ENCODE measurements at regions of chr20 and their contacts with region 1.

Region 1: DNA sequence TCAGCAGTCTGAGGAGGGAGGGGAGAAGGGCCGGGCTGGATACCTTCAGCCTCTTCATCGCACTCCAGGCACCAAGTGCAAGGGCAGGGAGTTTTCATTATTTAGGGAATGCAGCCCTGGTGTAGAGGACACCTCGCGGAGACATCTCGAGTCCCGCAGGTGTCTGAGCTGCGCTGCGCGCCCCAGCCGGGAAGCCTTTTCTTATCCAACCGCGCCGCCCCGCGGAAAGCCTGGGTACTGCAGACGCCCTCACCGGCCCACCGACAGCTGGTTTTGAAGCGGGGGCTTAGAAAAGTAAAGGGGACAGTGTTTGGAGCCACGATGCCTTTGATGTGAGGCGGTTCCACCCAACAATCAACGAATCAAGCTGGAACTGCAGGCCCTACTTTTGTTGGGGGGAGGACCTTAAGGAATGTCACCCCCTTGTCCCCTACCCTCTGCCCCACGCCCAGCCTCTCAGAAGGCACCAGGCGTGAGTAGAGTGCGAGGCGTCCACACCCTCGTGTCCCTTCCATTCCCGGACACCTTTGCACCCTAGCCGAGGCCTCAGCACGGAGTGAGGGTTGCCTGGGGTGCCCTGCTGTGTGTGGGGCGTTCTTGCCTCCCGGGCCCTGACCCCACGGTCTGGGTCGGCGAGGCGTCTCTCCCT is 8.6 kb downstream of the NKX2-2 start:
- DNase-seq: peak; percentile 70 to 83
- ATAC-seq: peak; percentile 41 to 77
- H3K4me3 ChIP-seq: peak overlapping the region; percentile 55
- H3K27ac ChIP-seq: peak overlapping the region; percentile 40 to 77; a peak in 5 of 6 replicates
- H3K4me1 ChIP-seq: peaks cover 6% of the 10 kb centered on the region; the same call in 1 of the 3 replicates
- CTCF ChIP-seq: peak; percentile 95
- EP300 ChIP-seq: no peak
- POLR2A ChIP-seq: no peak
- RAD21 ChIP-seq: peak; percentile 97 to 99

Region 2: GRCh38 chr20:20824924-20825584 is 680.2 kb before region 1 on chr20:
- CTCF ChIA-PET with region 1: interaction called, 13 read pairs
- POLR2A ChIA-PET with region 1: no interaction called
- DNase-seq: peak; percentile 49 to 53
- ATAC-seq: peak; percentile 35 to 80; a peak in 3 of 6 replicates
- H3K4me3 ChIP-seq: no peak overlapping the region
- H3K27ac ChIP-seq: no peak overlapping the region
- H3K4me1 ChIP-seq: no peaks in the 10 kb centered on the region
- CTCF ChIP-seq: peak; percentile 76
- EP300 ChIP-seq: no peak
- POLR2A ChIP-seq: no peak
- RAD21 ChIP-seq: peak; percentile 67

Region 3: GRCh38 chr20:20843982-20844381 is 661.3 kb before region 1 on chr20:
- CTCF ChIA-PET with region 1: interaction called, 199 read pairs
- POLR2A ChIA-PET with region 1: no interaction called
- DNase-seq: no peak
- ATAC-seq: peak in 1 of 2 experiments; percentile 53; a peak in 2 of 6 replicates
- H3K4me3 ChIP-seq: no peak overlapping the region
- H3K27ac ChIP-seq: no peak overlapping the region
- H3K4me1 ChIP-seq: no peaks in the 10 kb centered on the region
- CTCF ChIP-seq: no peak
- EP300 ChIP-seq: no peak
- POLR2A ChIP-seq: no peak
- RAD21 ChIP-seq: no peak

Region 4: GRCh38 chr20:20860078-20860806 is 645.0 kb before region 1 on chr20:
- CTCF ChIA-PET with region 1: interaction called, 128 read pairs
- POLR2A ChIA-PET with region 1: no interaction called
- DNase-seq: peak; percentile 87 to 92
- ATAC-seq: peak; percentile 93 to 97
- H3K4me3 ChIP-seq: no peak overlapping the region
- H3K27ac ChIP-seq: no peak overlapping the region
- H3K4me1 ChIP-seq: no peaks in the 10 kb centered on the region
- CTCF ChIP-seq: peak; percentile 95
- EP300 ChIP-seq: no peak
- POLR2A ChIP-seq: no peak
- RAD21 ChIP-seq: peak; percentile 81 to 88

Region 5: DNA sequence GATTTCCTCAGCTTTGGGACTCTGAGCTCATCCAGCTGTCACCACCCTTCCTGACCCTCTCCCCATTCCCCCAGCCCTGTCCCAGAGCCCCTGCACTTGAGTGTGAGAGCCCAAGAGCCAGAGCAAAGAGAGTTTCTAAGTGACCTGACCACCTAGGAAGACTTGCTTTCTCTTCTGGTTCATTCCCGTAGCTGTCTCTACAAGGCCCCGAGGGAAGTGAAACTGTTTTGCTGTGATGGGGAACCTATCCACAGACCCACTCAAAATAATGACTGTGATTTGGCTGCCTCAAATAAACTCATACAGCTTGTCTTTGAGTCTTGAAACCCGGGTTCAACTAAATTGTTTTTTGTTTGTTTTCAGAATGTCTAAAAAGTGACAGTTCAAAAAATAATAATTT is 276.8 kb before region 1 on chr20:
- CTCF ChIA-PET with region 1: interaction called, 29 read pairs
- POLR2A ChIA-PET with region 1: no interaction called
- DNase-seq: no peak
- ATAC-seq: no peak
- H3K4me3 ChIP-seq: no peak overlapping the region
- H3K27ac ChIP-seq: no peak overlapping the region
- H3K4me1 ChIP-seq: peaks cover 4% of the 10 kb centered on the region; the same call in 1 of the 3 replicates
- CTCF ChIP-seq: no peak
- EP300 ChIP-seq: no peak
- POLR2A ChIP-seq: no peak
- RAD21 ChIP-seq: no peak

Region 6: DNA sequence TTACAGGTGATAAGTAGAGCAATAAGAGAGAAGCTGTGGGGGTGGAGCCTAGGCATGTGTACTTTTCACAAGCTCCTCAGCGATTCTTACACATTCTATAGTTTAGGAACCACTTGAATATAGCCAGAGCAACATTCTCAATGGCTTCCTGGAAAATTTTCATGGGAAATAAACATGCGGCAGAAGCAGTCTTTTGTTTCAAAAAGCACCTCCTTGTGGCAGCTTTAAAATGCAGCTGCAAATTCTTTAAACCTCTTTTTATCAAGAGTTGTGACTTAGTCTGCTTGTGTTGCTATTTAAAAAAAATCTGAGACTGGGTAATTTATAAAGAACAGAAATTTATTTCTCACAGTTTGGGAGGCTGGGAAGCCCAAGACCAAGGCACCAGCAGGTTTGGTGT is 15.2 kb before region 1 on chr20:
- CTCF ChIA-PET with region 1: interaction called, 115 read pairs
- POLR2A ChIA-PET with region 1: no interaction called
- DNase-seq: no peak
- ATAC-seq: no peak
- H3K4me3 ChIP-seq: no peak overlapping the region
- H3K27ac ChIP-seq: no peak overlapping the region
- H3K4me1 ChIP-seq: no peaks in the 10 kb centered on the region
- CTCF ChIP-seq: peak; percentile 25; the same call in 1 of the 3 replicates
- EP300 ChIP-seq: no peak
- POLR2A ChIP-seq: no peak
- RAD21 ChIP-seq: peak; percentile 32 to 33; a peak in 3 of 5 replicates

Region 7: GRCh38 chr20:21571841-21572690 is 66.8 kb after region 1 on chr20:
- CTCF ChIA-PET with region 1: interaction called, 14 read pairs
- POLR2A ChIA-PET with region 1: no interaction called
- DNase-seq: no peak
- ATAC-seq: peak in 1 of 2 experiments; percentile 45; a peak in 2 of 6 replicates
- H3K4me3 ChIP-seq: no peak overlapping the region
- H3K27ac ChIP-seq: no peak overlapping the region
- H3K4me1 ChIP-seq: no peaks in the 10 kb centered on the region
- CTCF ChIP-seq: peak; percentile 88
- EP300 ChIP-seq: no peak
- POLR2A ChIP-seq: no peak
- RAD21 ChIP-seq: peak; percentile 77 to 81